Sigmoid colon (tissue), 7 donors: ENCODE measurements at regions of chr5 and their contacts with region 1.

Region 1: DNA sequence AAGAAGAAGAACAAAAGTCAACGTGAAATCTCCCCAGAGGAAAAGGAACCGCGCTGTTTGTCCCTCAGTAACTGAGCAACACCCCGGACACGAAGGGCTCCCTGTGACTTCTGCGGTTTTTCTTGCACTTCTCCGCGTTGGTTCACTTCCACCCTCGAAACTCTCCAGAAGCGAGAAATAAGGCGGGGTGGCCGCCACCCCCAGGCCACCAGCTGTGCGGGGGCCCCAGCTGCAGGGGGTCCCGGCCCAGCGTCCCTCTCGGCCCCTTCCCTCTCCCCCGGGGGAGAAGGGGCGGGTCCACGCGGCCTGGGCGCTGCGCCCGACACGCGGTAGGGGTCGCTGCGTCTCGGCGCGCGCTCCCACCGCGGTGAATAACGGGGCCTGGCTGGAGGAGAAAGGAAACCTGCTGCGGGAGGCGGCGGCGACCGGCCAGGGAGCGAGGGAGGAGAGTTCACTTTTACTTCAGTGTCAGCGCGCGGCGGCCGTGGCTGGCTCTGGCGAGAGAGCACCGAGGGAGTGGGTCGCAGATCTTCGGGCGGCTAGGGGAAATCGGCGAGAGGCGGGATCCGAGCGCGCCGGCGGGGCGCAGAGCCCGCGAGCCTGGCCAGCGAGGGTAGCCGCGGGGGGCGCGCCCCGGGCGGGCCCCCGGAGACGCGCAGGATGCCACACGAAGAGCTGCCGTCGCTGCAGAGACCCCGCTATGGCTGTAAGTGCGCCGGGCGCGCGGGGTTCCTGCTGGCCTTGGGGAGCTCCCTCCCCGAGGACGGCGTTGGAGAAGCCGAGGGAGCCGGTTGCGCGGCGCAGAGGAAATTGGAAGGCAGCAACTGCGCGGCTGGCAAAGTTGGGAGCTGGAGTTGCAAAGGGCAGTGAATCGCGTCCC is at the start of gene IQGAP2:
- DNase-seq: peak; percentile 77
- H3K4me3 ChIP-seq: peak within 1 kb of the TSS; percentile 33 to 63 (median 58)
- H3K27ac ChIP-seq: peak within 1 kb of the TSS; percentile 66 to 77 (median 72)
- H3K4me1 ChIP-seq: peaks cover 0 to 21% (median 11%) of the 10 kb centered on the region in 4 donors
- H3K27me3 ChIP-seq: peaks cover 9 to 30% (median 10%) of the 10 kb centered on the region in 3 donors
- CTCF ChIP-seq: peak; percentile 9 to 50 (median 30)
- EP300 ChIP-seq: no peak
- POLR2A ChIP-seq: no peak
- total RNA-seq, gene IQGAP2: 15.0 to 24.6 (median 16.3) TPM

Region 2: GRCh38 chr5:76544268-76544926 is 141.3 kb after region 1 on chr5:
- intact Hi-C with region 1: loop called (anchors 5 kb)
- DNase-seq: no peak
- H3K4me3 ChIP-seq: no peak overlapping the region
- H3K27ac ChIP-seq: peak overlapping the region in 1 of 4 donors; percentile 32
- H3K4me1 ChIP-seq: peaks cover 0 to 10% (median 4%) of the 10 kb centered on the region in 4 donors
- H3K27me3 ChIP-seq: no peaks in the 10 kb centered on the region
- CTCF ChIP-seq: peak in 1 of 4 experiments; percentile 37
- EP300 ChIP-seq: no peak
- POLR2A ChIP-seq: no peak

Region 3: GRCh38 chr5:76582230-76583162 is 179.4 kb after region 1 on chr5:
- intact Hi-C with region 1: loop called (anchors 2 kb)
- DNase-seq: no peak
- H3K4me3 ChIP-seq: no peak overlapping the region
- H3K27ac ChIP-seq: no peak overlapping the region
- H3K4me1 ChIP-seq: no peaks in the 10 kb centered on the region
- H3K27me3 ChIP-seq: no peaks in the 10 kb centered on the region
- CTCF ChIP-seq: no peak
- EP300 ChIP-seq: no peak
- POLR2A ChIP-seq: no peak

Region 4: DNA sequence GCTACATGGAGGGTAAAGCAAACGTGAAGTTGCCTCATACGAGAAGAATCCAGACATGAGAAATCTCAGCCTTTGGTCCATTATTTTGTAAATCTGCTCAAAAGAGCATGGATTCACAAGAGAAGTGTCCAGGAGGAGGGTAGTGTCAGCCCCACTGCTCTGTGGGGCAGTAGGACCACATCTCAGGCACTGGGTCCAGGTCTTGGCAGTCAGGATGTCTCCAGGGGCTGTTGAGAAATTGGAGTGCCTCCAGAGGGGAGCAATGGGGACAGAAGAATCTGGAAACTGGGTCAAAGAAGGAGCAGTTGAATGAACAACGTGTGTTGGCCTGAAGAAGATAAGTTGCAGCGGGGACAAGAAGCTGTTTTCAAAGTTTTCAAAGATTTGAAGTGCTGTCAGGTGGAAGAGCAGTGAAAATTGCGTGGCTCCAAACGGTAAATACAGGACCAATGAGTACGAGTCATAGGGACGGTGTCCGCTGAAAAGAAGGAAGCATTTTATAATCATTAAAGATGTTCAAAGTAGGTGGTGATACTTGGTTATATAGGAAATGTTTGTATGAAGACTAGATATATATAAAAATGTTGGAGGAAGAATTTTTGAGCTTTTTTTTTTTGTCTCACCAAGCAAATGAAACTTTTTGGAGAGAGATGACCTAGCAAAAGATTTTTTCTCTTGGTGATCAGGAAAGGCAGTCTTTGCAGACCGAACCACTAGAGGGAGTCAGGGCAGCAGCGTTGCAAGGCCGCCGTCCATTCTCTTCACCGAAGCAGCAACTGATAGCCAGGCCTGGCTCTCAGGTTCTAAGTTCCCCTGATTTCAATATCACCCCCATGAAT is 741.1 kb after region 1 on chr5:
- intact Hi-C with region 1: no loop called
- DNase-seq: peak; percentile 86
- H3K4me3 ChIP-seq: no peak overlapping the region
- H3K27ac ChIP-seq: no peak overlapping the region
- H3K4me1 ChIP-seq: no peaks in the 10 kb centered on the region
- H3K27me3 ChIP-seq: no peaks in the 10 kb centered on the region
- CTCF ChIP-seq: peak; percentile 31 to 82 (median 63)
- EP300 ChIP-seq: no peak
- POLR2A ChIP-seq: no peak